ENCODE measurements at regions of chr3 and their contacts with region 1.

Region 1: DNA sequence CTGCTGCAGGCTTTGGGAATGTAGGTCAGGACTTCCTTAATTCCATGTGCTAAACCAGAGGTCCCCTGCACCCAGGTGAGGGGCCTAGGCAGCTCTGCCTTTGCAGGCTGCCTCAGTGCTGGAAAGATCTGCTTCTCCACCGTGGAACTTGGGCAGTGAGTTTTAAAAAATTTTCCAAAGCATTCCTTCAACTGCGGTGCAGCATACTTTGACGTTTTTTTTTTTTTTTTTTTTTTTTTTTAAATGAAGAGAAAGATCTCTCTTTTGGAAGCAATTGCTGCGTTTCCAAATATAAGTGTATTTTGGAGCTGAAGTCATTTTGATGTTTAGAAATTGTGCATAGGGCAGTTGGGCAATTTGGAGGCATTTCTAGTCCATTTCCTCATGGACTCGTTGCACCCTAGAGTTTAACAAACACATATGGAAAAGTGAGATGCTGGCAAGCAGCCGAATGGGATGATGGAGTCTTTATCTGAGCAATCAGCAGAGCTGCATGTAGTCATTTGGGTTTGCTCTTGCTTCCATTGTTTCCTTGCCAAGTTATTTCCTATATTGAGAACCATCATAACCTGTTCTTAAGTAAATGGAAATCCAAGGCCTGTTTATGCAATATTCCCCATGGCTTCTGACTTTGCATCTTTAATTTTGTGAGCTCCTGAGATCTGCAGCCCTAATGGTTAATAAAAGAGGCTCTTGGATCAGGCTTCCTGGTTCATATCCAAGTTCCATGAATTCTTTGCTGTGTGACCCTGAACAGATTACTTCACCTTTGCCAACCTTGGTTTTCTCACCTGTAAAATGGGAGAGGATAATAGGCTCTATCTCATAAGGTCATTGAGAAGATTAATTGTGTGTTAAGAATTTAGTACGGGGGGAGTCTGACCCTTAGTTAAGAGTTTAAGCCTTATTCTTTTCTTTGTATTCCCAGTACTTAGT is 31.2 kb downstream of the ITPR1 start:
- DNase-seq: no peak
- ATAC-seq: no peak
- H3K4me3 ChIP-seq: no peak overlapping the region
- H3K4me3 Mint-ChIP-seq: peak overlapping the region; percentile 21
- H3K27ac ChIP-seq: no peak overlapping the region
- H3K27ac Mint-ChIP-seq: peak overlapping the region; percentile 17
- H3K4me1 ChIP-seq: peaks cover 25 to 48% of the 10 kb centered on the region in 2 donors
- H3K4me1 Mint-ChIP-seq: peaks cover 73% of the 10 kb centered on the region
- H3K27me3 ChIP-seq: no peaks in the 10 kb centered on the region
- H3K27me3 Mint-ChIP-seq: no peaks in the 10 kb centered on the region
- CTCF ChIP-seq: no peak

Region 2: GRCh38 chr3:4474683-4475490 is 49.5 kb before region 1 on chr3:
- CTCF ChIA-PET with region 1: no interaction called
- POLR2A ChIA-PET with region 1: no interaction called
- intact Hi-C with region 1: no loop called
- DNase-seq: peak; percentile 38
- ATAC-seq: peak; percentile 56
- H3K4me3 ChIP-seq: no peak overlapping the region
- H3K4me3 Mint-ChIP-seq: peak overlapping the region; percentile 53
- H3K27ac ChIP-seq: peak overlapping the region; percentile 42 to 77
- H3K27ac Mint-ChIP-seq: peak overlapping the region; percentile 74
- H3K4me1 ChIP-seq: peaks cover 18 to 21% of the 10 kb centered on the region in 2 donors
- H3K4me1 Mint-ChIP-seq: peaks cover 14% of the 10 kb centered on the region
- H3K27me3 ChIP-seq: no peaks in the 10 kb centered on the region
- H3K27me3 Mint-ChIP-seq: no peaks in the 10 kb centered on the region
- CTCF ChIP-seq: no peak

Region 3: DNA sequence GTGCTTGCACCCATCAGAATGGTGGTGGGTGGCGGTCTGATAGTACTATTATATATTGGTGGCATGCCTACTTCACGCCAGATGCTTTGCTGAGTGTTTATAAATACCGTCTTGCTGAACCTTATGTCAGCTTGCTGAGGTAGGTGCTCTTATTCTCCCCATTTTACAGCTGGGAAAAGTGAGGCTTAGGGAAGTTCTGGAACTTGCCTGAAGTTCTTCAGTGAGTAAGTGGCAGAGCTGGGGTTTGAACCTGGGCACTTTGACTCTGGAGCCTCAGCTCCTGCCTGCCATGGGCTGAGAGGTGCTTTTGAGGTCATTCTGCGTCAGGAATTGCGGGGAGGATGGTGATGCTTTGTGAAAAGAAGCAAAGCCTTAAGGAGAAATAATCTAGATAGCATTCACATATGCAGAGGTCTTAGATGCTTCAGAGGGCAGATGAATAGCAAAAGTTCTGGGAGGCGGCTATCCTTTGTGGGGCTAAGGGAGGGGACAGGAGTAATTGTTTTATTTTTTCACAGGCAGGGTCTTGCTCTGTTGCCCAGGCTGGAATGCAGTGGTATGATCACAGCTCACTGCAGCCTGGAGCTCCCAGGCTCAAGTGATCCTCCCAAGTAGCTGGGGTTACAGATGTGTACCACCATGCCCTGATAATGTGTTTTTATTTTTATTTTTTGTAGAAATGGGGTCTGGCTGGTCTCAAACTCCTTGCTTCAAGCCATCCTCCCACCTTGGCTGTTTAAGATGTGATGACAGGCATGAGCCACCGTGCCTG is 12.7 kb before region 1 on chr3:
- CTCF ChIA-PET with region 1: interaction called, 4 read pairs
- POLR2A ChIA-PET with region 1: no interaction called
- intact Hi-C with region 1: loop called (anchors 2 kb)
- DNase-seq: no peak
- ATAC-seq: no peak
- H3K4me3 ChIP-seq: no peak overlapping the region
- H3K4me3 Mint-ChIP-seq: no peak overlapping the region
- H3K27ac ChIP-seq: peak overlapping the region in 1 of 2 donors; percentile 81
- H3K27ac Mint-ChIP-seq: peak overlapping the region; percentile 83
- H3K4me1 ChIP-seq: peaks cover 76 to 79% of the 10 kb centered on the region in 2 donors
- H3K4me1 Mint-ChIP-seq: peaks cover 88% of the 10 kb centered on the region
- H3K27me3 ChIP-seq: no peaks in the 10 kb centered on the region
- H3K27me3 Mint-ChIP-seq: no peaks in the 10 kb centered on the region
- CTCF ChIP-seq: no peak

Measured in B cell (primary cell).